OCI-LY7 (cell line): ENCODE measurements at regions of chr4 and their contacts with region 1.

Region 1: DNA sequence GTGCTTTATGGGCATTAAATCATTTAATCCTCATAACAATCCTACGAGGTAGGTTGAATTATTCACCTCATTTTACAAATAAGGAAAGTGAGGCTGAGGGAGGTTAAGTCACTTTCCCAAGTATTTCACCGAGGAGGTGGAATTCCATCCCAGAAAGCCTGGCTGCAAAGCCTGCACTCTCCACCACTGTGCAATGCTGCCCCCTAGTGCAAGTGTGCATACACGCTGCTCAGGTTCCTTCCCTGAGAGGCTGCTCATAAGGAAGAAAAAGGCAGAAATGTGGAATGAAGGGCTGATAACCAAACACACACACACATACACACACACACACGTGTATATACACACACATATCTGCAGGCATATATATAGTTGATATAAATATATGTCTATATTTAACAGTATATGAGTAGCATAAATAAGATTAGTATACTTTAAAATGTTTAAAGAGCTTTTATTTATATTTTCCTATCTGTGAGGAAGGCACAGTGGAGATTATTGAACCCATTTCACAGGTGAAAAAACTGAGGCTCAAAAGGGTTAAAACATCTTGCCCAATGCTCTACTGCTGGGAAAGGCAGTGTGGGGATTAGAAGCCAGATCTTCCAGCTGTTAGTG is 714.5 kb upstream of the TENM3 start:
- DNase-seq: peak; percentile 60
- H3K4me3 ChIP-seq: no peak overlapping the region
- H3K27ac ChIP-seq: no peak overlapping the region
- H3K4me1 ChIP-seq: no peaks in the 10 kb centered on the region
- CTCF ChIP-seq: peak; percentile 96

Region 2: GRCh38 chr4:180840142-180840541 is 688.5 kb before region 1 on chr4:
- CTCF ChIA-PET with region 1: no interaction called
- POLR2A ChIA-PET with region 1: no interaction called
- intact Hi-C with region 1: loop called (anchors 10 kb)
- DNase-seq: peak; percentile 30
- H3K4me3 ChIP-seq: no peak overlapping the region
- H3K27ac ChIP-seq: no peak overlapping the region
- H3K4me1 ChIP-seq: peaks cover 11% of the 10 kb centered on the region
- CTCF ChIP-seq: no peak

Region 3: GRCh38 chr4:181143250-181143854 is 385.3 kb before region 1 on chr4:
- CTCF ChIA-PET with region 1: interaction called, 4 read pairs
- POLR2A ChIA-PET with region 1: no interaction called
- intact Hi-C with region 1: loop called (anchors 1 kb)
- DNase-seq: peak; percentile 74
- H3K4me3 ChIP-seq: no peak overlapping the region
- H3K27ac ChIP-seq: no peak overlapping the region
- H3K4me1 ChIP-seq: no peaks in the 10 kb centered on the region
- CTCF ChIP-seq: peak; percentile 96

Region 4: DNA sequence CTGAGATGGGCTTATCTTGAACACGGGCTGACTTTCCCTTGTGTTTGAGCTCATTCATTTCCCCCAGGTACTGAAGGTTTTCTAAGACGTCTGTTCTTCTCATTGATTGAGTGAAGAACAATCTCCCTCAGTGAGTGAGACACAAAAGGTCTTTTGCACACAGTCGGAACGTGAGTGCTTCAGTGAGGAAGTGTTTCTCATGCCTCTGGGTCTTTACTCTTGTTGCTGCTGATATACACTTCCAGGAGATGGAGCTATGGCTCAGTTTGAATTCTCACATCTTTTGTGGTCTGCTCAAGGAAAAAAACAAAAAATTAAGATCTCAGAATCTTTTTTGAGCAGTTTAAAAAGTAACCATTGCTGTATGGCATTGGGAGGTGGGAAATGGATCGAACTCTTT is 267.4 kb before region 1 on chr4:
- CTCF ChIA-PET with region 1: no interaction called
- POLR2A ChIA-PET with region 1: no interaction called
- intact Hi-C with region 1: loop called (anchors 2 kb)
- DNase-seq: peak; percentile 10
- H3K4me3 ChIP-seq: no peak overlapping the region
- H3K27ac ChIP-seq: no peak overlapping the region
- H3K4me1 ChIP-seq: no peaks in the 10 kb centered on the region
- CTCF ChIP-seq: peak; percentile 62

Region 5: GRCh38 chr4:181301735-181302710 is 226.7 kb before region 1 on chr4:
- CTCF ChIA-PET with region 1: interaction called, 3 read pairs
- POLR2A ChIA-PET with region 1: no interaction called
- intact Hi-C with region 1: loop called (anchors 1 kb)
- DNase-seq: peak; percentile 74
- H3K4me3 ChIP-seq: peak overlapping the region; percentile 32
- H3K27ac ChIP-seq: no peak overlapping the region
- H3K4me1 ChIP-seq: no peaks in the 10 kb centered on the region
- CTCF ChIP-seq: peak; percentile 92